Ascending aorta (tissue), 2 donors: ENCODE measurements at regions of chr7 and their contacts with region 1.

Region 1: GRCh38 chr7:143214789-143215679 is 6.8 kb upstream of the TAS2R40 start:
- DNase-seq: peak in 1 of 2 donors; percentile 73
- H3K4me3 ChIP-seq: no peak overlapping the region
- H3K27ac ChIP-seq: no peak overlapping the region
- H3K4me1 ChIP-seq: no peaks in the 10 kb centered on the region
- H3K27me3 ChIP-seq: no peaks in the 10 kb centered on the region
- CTCF ChIP-seq: peak; percentile 90 to 98 (median 97)

Region 2: DNA sequence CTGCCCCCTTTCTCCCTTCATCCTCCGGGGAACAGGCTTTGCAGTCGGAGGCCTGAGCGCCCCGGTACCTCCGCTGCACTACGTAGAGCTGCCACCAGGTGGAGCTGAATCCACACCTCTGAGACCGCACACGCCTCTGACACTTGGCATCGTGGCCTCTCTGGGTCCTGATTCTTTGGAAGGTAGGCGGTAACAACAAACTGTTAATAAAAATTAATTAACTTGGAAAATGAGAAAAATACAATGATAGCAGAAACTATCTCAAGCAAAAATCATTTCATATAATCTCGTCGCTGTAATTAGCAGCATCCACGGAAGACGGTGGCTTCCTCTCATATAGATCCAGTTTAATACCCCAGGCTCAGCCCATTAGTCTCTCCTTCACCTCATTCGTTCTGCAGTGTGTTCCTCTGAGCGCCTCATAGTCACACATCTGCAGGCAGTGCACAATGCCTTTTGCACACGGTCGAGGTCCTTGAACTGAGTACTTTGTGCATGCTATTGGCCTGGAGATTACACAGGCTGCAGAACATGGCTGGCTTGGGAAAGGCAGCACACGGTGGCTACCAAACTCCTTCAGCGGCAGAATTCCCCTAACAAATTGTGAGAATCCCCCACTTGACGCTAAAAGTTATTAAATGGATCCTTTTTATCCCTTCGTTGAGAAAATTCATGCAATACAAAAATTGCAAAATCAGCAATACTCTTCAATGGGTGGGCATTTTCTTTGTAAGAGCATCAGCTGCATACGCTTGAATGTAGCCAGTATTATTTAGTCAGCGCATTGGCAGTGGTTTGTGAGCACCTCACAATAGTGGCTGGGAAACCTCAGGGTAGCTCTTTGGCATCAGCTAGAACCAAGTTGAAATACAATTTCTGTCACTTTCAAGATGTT is 206.8 kb before region 1 on chr7:
- intact Hi-C with region 1: loop called (anchors 1 kb)
- DNase-seq: peak in 1 of 2 donors; percentile 79
- H3K4me3 ChIP-seq: no peak overlapping the region
- H3K27ac ChIP-seq: no peak overlapping the region
- H3K4me1 ChIP-seq: no peaks in the 10 kb centered on the region
- H3K27me3 ChIP-seq: no peaks in the 10 kb centered on the region
- CTCF ChIP-seq: peak; percentile 83 to 95 (median 94)